ENCODE measurements at regions of chr5 and their contacts with region 1.

Region 1: GRCh38 chr5:66952153-66952552 is 244.4 kb downstream of the CD180 start:
- DNase-seq: no peak
- ATAC-seq: no peak
- H3K4me3 ChIP-seq: no peak overlapping the region
- H3K4me3 Mint-ChIP-seq: no peak overlapping the region
- H3K27ac ChIP-seq: no peak overlapping the region
- H3K27ac Mint-ChIP-seq: no peak overlapping the region
- H3K4me1 ChIP-seq: no peaks in the 10 kb centered on the region
- H3K4me1 Mint-ChIP-seq: peaks cover 8% of the 10 kb centered on the region
- H3K27me3 ChIP-seq: no peaks in the 10 kb centered on the region
- H3K27me3 Mint-ChIP-seq: peaks cover 7% of the 10 kb centered on the region
- CTCF ChIP-seq: no peak

Region 2: GRCh38 chr5:67015541-67016191 is 63.5 kb after region 1 on chr5:
- CTCF ChIA-PET with region 1: no interaction called
- POLR2A ChIA-PET with region 1: no interaction called
- intact Hi-C with region 1: no loop called
- DNase-seq: no peak
- ATAC-seq: no peak
- H3K4me3 ChIP-seq: no peak overlapping the region
- H3K4me3 Mint-ChIP-seq: no peak overlapping the region
- H3K27ac ChIP-seq: no peak overlapping the region
- H3K27ac Mint-ChIP-seq: no peak overlapping the region
- H3K4me1 ChIP-seq: no peaks in the 10 kb centered on the region
- H3K4me1 Mint-ChIP-seq: peaks cover 34% of the 10 kb centered on the region
- H3K27me3 ChIP-seq: no peaks in the 10 kb centered on the region
- H3K27me3 Mint-ChIP-seq: no peaks in the 10 kb centered on the region
- CTCF ChIP-seq: no peak

Region 3: DNA sequence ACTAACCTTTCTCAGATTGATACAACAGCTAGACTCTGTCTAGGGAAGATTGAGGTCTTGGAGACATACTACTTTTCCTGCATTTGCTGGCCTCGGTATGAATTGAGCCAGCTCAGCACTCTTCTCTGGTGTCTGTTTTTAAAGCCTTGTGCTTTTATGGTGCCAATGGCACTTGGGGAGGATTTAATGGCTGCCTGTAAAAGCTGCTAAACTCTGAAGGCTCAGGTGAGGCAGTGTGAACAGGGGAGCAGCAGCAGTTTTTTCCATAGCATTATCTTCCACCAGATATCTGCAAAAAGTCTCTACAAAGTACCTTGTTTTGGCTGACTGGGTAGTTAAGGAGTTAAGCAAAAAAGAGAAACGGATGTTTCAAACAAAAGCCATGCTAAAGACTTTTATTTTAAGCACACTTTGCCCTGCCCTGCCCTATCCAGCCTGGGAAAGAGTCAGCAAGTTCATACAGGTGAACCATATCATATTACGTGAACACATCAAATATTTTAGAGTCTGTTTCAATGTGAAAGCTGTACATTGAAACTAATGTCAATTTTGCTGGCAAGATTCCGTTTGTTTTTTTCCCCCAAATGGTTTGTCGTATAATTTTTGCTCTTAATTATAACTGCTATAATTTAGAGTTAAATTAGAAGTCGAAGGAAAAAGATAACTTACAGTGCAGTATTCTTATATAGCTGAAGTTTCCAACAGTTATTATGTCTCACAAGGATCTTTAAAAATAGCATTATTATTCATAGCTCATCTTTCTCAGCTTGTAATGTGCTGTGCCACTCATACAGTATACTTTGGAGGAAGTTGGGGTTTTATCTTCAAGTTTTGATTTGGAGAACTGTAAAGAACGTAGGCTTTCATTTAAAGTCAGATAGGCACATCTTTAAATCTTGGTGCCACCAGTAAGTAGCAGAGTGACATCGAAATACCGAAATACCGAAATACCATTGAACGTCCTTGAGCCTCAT is 668.6 kb after region 1 on chr5:
- CTCF ChIA-PET with region 1: no interaction called
- POLR2A ChIA-PET with region 1: no interaction called
- intact Hi-C with region 1: loop called in 1 of 2 experiments (anchors 5 kb)
- DNase-seq: no peak
- ATAC-seq: no peak
- H3K4me3 ChIP-seq: no peak overlapping the region
- H3K4me3 Mint-ChIP-seq: no peak overlapping the region
- H3K27ac ChIP-seq: no peak overlapping the region
- H3K27ac Mint-ChIP-seq: no peak overlapping the region
- H3K4me1 ChIP-seq: no peaks in the 10 kb centered on the region
- H3K4me1 Mint-ChIP-seq: no peaks in the 10 kb centered on the region
- H3K27me3 ChIP-seq: no peaks in the 10 kb centered on the region
- H3K27me3 Mint-ChIP-seq: peaks cover 3% of the 10 kb centered on the region
- CTCF ChIP-seq: no peak